Psoas muscle (tissue), 8 donors: ENCODE measurements at regions of chr13 and their contacts with region 1.

Region 1: DNA sequence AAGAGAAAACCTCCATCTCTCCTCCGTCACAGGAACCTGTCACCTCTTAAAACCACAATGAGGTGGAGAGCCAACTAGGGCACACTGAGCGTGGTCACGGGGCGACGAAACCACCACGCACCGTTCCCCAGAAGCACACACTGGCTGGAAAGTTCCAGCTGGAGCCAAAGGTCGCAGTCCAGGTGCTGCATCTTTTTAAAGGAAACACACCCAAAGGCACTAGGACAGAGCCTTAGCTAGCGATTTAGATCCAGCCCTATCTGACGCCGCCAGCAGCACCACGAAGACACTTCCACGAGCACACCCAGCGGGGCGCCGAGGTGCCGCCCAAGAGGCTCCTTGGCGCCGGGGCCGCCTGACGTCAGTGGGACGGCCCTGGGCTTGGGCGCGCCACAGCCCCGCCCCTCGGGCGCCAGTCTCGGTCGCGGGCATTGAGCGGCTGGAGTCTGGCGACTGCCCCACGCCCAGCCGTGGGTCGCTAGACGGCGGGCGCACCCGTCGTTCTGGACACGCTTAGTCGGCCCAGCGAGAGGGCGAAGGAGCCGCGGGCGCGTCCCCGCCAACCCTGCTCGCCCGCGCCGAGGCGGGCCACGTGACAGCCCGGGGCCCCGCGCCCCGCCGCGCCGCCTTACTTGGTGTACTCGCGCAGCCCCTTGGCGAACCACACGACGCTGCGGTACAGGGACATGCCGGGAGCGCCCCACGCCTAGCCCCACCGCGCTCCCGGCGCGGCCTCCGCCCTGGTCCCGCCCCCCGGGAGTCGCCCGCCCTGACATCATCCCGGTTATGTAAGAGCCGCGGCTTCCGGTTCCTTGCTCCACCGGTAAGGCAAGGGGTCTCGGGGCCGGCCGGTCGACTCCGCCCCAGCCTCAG is at the start of gene DHRS12:
- DNase-seq: peak; percentile 89 to 94
- ATAC-seq: peak; percentile 90 to 91 (median 90)
- H3K4me3 ChIP-seq: peak within 1 kb of the TSS; percentile 95
- H3K27ac ChIP-seq: peak within 1 kb of the TSS; percentile 100
- H3K4me1 ChIP-seq: peaks cover 26% of the 10 kb centered on the region
- H3K27me3 ChIP-seq: no peaks in the 10 kb centered on the region
- CTCF ChIP-seq: no peak
- total RNA-seq, gene DHRS12: 4.1 to 10.1 (median 6.9) TPM

Region 2: DNA sequence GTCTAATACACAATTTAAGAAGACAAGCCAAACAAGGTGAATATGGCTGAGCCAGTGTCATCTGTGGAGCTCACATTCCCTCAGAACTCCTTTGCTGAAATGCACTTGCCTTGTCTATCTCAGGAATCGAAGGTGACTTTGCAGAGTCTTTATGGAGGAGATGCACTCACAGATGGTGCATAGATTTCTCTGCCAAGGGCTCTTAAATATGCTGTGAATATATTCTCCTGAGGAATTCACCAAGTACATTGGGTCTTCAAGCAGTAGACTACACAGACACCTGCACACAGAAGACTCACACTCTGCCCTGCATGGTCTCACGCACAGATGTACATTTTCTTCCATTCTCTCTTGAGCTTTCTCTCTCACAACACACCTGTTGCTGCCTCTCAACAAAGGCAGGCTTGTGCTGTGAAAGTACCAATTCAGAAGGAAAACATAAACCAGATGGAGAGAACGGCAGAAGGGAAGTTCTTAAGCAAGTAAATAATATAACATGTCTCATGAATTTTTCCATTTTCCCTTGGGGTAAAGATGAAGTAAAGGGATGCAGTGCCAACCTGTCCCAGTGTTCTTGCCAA is 1134.9 kb before region 1 on chr13:
- intact Hi-C with region 1: no loop called
- DNase-seq: no peak
- ATAC-seq: no peak
- H3K4me3 ChIP-seq: no peak overlapping the region
- H3K27ac ChIP-seq: no peak overlapping the region
- H3K4me1 ChIP-seq: peaks cover 5% of the 10 kb centered on the region
- H3K27me3 ChIP-seq: no peaks in the 10 kb centered on the region
- CTCF ChIP-seq: no peak

Region 3: GRCh38 chr13:51583875-51584730 is 219.6 kb before region 1 on chr13 and contains the start of gene WDFY2:
- intact Hi-C with region 1: loop called (anchors 2 to 5 kb)
- DNase-seq: peak; percentile 99 to 100
- ATAC-seq: peak; percentile 94 to 96 (median 95)
- H3K4me3 ChIP-seq: peak within 1 kb of the TSS; percentile 83
- H3K27ac ChIP-seq: peak within 1 kb of the TSS; percentile 84
- H3K4me1 ChIP-seq: peaks cover 12% of the 10 kb centered on the region
- H3K27me3 ChIP-seq: no peaks in the 10 kb centered on the region
- CTCF ChIP-seq: no peak
- total RNA-seq, gene WDFY2: 1.4 to 2.3 (median 1.9) TPM

Region 4: GRCh38 chr13:51861723-51862300 is 58.2 kb after region 1 on chr13 and contains the start of gene CCDC70:
- intact Hi-C with region 1: no loop called
- DNase-seq: no peak
- ATAC-seq: no peak
- H3K4me3 ChIP-seq: no peak within 1 kb of the TSS
- H3K27ac ChIP-seq: no peak within 1 kb of the TSS
- H3K4me1 ChIP-seq: no peaks in the 10 kb centered on the region
- H3K27me3 ChIP-seq: no peaks in the 10 kb centered on the region
- CTCF ChIP-seq: no peak
- total RNA-seq, gene CCDC70: not detected

Region 5: DNA sequence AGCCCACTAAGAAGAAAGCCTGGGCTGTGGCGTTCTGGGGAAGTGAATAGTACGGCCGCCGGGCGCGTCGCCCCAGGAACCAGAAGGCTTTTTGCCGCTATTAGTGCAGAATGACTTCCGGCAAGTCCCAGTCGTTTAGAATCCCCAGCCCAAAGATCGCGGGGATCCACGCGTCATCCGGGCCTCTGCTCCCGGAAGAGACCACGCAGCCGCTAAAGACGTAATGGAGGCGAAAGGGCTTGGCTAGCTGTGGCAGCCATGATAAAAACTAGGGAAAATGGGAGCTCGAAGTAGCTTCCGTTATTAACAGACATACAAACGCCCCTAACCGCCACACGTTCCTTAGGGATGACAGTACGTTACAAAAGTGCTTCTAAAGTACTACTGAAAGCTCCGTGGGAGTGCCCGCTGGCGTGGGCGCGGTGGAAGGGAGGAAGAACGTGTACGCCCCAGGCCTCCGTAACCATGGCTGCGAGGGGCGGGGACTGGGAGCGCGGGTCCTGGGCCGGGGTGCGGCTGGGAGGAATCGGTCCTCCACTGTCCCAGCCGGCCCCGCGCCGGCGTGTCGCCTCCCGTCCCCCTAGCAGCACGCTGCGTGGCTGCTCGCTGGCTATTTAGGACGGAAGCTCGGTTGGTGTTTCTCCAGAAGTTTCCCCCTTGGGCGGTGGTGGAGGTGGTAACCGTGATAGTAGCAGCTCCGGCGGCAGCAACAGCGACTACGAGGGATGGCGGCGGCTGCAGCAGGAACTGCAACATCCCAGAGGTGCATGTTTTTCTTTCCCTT is 848.7 kb after region 1 on chr13 and contains the start of gene SUGT1:
- intact Hi-C with region 1: loop called in 1 of 2 experiments (anchors 10 kb)
- DNase-seq: peak; percentile 98 to 99
- ATAC-seq: peak; percentile 98 to 99 (median 98)
- H3K4me3 ChIP-seq: peak within 1 kb of the TSS; percentile 91
- H3K27ac ChIP-seq: peak within 1 kb of the TSS; percentile 88
- H3K4me1 ChIP-seq: peaks cover 23% of the 10 kb centered on the region
- H3K27me3 ChIP-seq: no peaks in the 10 kb centered on the region
- CTCF ChIP-seq: peak; percentile 66
- total RNA-seq, gene SUGT1: 39.4 to 49.4 (median 42.0) TPM